PC-9 (cell line): ENCODE measurements at regions of chr14 and their contacts with region 1.

Region 1: GRCh38 chr14:64937821-64938193 is 4.7 kb downstream of the GPX2 start:
- DNase-seq: peak in 1 of 2 experiments; percentile 42
- H3K4me3 ChIP-seq: no peak overlapping the region
- H3K27ac ChIP-seq: peak overlapping the region; percentile 4; the same call in 1 of the 2 replicates
- H3K4me1 ChIP-seq: peaks cover 26% of the 10 kb centered on the region
- H3K27me3 ChIP-seq: no peaks in the 10 kb centered on the region
- CTCF ChIP-seq: peak; percentile 63

Region 2: GRCh38 chr14:64338616-64339316 is 599.0 kb before region 1 on chr14:
- CTCF ChIA-PET with region 1: no interaction called
- POLR2A ChIA-PET with region 1: no interaction called
- intact Hi-C with region 1: no loop called
- DNase-seq: peak; percentile 98
- H3K4me3 ChIP-seq: peak overlapping the region; percentile 94
- H3K27ac ChIP-seq: peak overlapping the region; percentile 66
- H3K4me1 ChIP-seq: peaks cover 20% of the 10 kb centered on the region
- H3K27me3 ChIP-seq: no peaks in the 10 kb centered on the region
- CTCF ChIP-seq: no peak

Region 3: GRCh38 chr14:64363265-64363846 is 574.5 kb before region 1 on chr14:
- CTCF ChIA-PET with region 1: no interaction called
- POLR2A ChIA-PET with region 1: interaction called, 19 read pairs
- intact Hi-C with region 1: no loop called
- DNase-seq: no peak
- H3K4me3 ChIP-seq: no peak overlapping the region
- H3K27ac ChIP-seq: no peak overlapping the region
- H3K4me1 ChIP-seq: peaks cover 6% of the 10 kb centered on the region
- H3K27me3 ChIP-seq: no peaks in the 10 kb centered on the region
- CTCF ChIP-seq: no peak

Region 4: DNA sequence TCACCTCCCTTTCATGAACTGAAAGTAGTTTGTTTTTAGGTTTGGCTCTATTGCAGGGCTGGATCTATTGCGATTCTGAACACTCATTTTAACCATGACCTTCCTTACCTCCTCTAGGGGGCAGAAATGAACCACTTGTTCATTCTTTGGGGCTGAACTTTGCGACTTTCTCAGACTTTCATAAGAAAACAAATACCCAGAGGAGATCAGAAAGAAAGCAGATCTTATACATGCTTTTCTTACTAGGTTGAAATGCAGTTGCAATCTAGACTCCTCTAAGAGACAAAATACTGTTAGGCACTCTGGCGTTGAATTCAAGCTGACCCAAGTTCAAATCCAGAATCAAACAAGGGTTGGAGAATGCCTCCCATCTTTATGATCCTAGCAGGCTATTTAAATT is 266.2 kb before region 1 on chr14:
- CTCF ChIA-PET with region 1: no interaction called
- POLR2A ChIA-PET with region 1: no interaction called
- intact Hi-C with region 1: no loop called
- DNase-seq: peak in 1 of 2 experiments; percentile 65
- H3K4me3 ChIP-seq: no peak overlapping the region
- H3K27ac ChIP-seq: no peak overlapping the region
- H3K4me1 ChIP-seq: peaks cover 32% of the 10 kb centered on the region
- H3K27me3 ChIP-seq: no peaks in the 10 kb centered on the region
- CTCF ChIP-seq: peak; percentile 92

Region 5: GRCh38 chr14:64914237-64914971 is 23.4 kb before region 1 on chr14 and contains the start of gene CHURC1:
- CTCF ChIA-PET with region 1: interaction called, 3 read pairs
- POLR2A ChIA-PET with region 1: no interaction called
- intact Hi-C with region 1: loop called (anchors 1 kb)
- DNase-seq: peak; percentile 98 to 100
- H3K4me3 ChIP-seq: peak within 1 kb of the TSS; percentile 70
- H3K27ac ChIP-seq: peak within 1 kb of the TSS; percentile 62
- H3K4me1 ChIP-seq: peaks cover 20% of the 10 kb centered on the region
- H3K27me3 ChIP-seq: no peaks in the 10 kb centered on the region
- CTCF ChIP-seq: no peak
- total RNA-seq, gene CHURC1: 88.1 and 91.8 TPM in 2 replicates

Region 6: GRCh38 chr14:64960762-64961278 is 23.0 kb after region 1 on chr14:
- CTCF ChIA-PET with region 1: interaction called, 4 read pairs
- POLR2A ChIA-PET with region 1: interaction called, 10 read pairs
- intact Hi-C with region 1: no loop called
- DNase-seq: peak; percentile 85 to 92
- H3K4me3 ChIP-seq: no peak overlapping the region
- H3K27ac ChIP-seq: peak overlapping the region; percentile 44
- H3K4me1 ChIP-seq: peaks cover 53% of the 10 kb centered on the region
- H3K27me3 ChIP-seq: no peaks in the 10 kb centered on the region
- CTCF ChIP-seq: peak; percentile 51; the same call in 1 of the 2 replicates

Region 7: DNA sequence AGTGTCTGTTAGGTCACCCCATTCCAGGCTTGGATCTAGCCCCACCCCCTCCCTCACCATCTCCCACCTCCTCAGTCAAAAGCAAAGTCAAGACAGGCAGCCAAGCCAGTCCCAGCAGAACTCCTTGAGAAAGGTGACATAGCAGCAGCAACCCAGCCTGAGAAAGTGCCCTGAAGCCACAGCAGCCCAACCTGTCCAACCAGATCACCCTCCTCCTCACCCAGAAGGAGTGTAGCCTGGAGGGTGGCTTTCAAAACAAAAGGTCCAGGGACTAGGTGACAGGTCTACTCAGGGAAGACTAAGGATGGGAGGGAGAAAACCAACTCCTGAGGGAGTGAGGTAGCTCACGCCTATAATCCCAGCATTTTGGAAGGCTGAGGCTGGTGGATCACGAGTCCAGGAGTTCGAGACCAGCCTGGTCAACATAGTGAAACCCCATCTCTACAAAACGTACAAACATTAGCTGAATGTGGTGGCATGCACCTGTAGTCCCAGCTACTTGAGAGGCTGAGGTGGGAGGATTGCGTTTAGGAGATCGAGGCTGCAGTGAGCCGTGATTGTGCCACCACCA is 29.3 kb after region 1 on chr14:
- CTCF ChIA-PET with region 1: interaction called, 3 read pairs
- POLR2A ChIA-PET with region 1: interaction called, 5 read pairs
- intact Hi-C with region 1: loop called (anchors 1 kb)
- DNase-seq: peak; percentile 93 to 99
- H3K4me3 ChIP-seq: peak overlapping the region; percentile 38; the same call in 1 of the 2 replicates
- H3K27ac ChIP-seq: peak overlapping the region; percentile 88
- H3K4me1 ChIP-seq: peaks cover 76% of the 10 kb centered on the region
- H3K27me3 ChIP-seq: no peaks in the 10 kb centered on the region
- CTCF ChIP-seq: no peak

Region 8: GRCh38 chr14:64971943-64972791 is 34.4 kb after region 1 on chr14 and contains the start of gene RAB15:
- CTCF ChIA-PET with region 1: interaction called, 3 read pairs
- POLR2A ChIA-PET with region 1: interaction called, 12 read pairs
- intact Hi-C with region 1: loop called (anchors 1 kb)
- DNase-seq: peak in 1 of 2 experiments; percentile 42
- H3K4me3 ChIP-seq: peak within 1 kb of the TSS; percentile 83
- H3K27ac ChIP-seq: peak within 1 kb of the TSS; percentile 79
- H3K4me1 ChIP-seq: peaks cover 45% of the 10 kb centered on the region
- H3K27me3 ChIP-seq: no peaks in the 10 kb centered on the region
- CTCF ChIP-seq: no peak
- total RNA-seq, gene RAB15: 52.9 and 74.9 TPM in 2 replicates

Region 9: GRCh38 chr14:65042731-65043372 is 105.0 kb after region 1 on chr14:
- CTCF ChIA-PET with region 1: no interaction called
- POLR2A ChIA-PET with region 1: interaction called, 26 read pairs
- intact Hi-C with region 1: no loop called
- DNase-seq: no peak
- H3K4me3 ChIP-seq: no peak overlapping the region
- H3K27ac ChIP-seq: no peak overlapping the region
- H3K4me1 ChIP-seq: no peaks in the 10 kb centered on the region
- H3K27me3 ChIP-seq: no peaks in the 10 kb centered on the region
- CTCF ChIP-seq: no peak